Calu3 (cell line): ENCODE measurements at regions of chr1 and their contacts with region 1.

Region 1: GRCh38 chr1:89907727-89908212 is 86.9 kb downstream of the LRRC8D start:
- DNase-seq: no peak
- H3K4me3 Mint-ChIP-seq: no peak overlapping the region
- H3K27ac Mint-ChIP-seq: no peak overlapping the region
- H3K4me1 Mint-ChIP-seq: peaks cover 40% of the 10 kb centered on the region
- H3K27me3 Mint-ChIP-seq: no peaks in the 10 kb centered on the region
- CTCF ChIP-seq: no peak

Region 2: GRCh38 chr1:89890085-89890752 is 17.6 kb before region 1 on chr1:
- CTCF ChIA-PET with region 1: no interaction called
- intact Hi-C with region 1: loop called (anchors 2 kb)
- DNase-seq: peak; percentile 67
- H3K4me3 Mint-ChIP-seq: peak overlapping the region; percentile 34
- H3K27ac Mint-ChIP-seq: peak overlapping the region; percentile 82
- H3K4me1 Mint-ChIP-seq: peaks cover 57% of the 10 kb centered on the region
- H3K27me3 Mint-ChIP-seq: no peaks in the 10 kb centered on the region
- CTCF ChIP-seq: no peak